Activated CD4-positive, alpha-beta memory T cell treated with anti-CD3 and anti-CD28 coated beads for 36 hours (primary cell): ENCODE measurements at regions of chr16 and their contacts with region 1.

Region 1: GRCh38 chr16:80540516-80541272 is at the start of gene DYNLRB2:
- DNase-seq: peak; percentile 96
- H3K4me3 Mint-ChIP-seq: peak within 1 kb of the TSS; percentile 95
- H3K27ac Mint-ChIP-seq: peak within 1 kb of the TSS; percentile 94
- H3K4me1 Mint-ChIP-seq: peaks cover 26% of the 10 kb centered on the region
- H3K27me3 Mint-ChIP-seq: no peaks in the 10 kb centered on the region
- total RNA-seq, gene DYNLRB2: not detected

Region 2: DNA sequence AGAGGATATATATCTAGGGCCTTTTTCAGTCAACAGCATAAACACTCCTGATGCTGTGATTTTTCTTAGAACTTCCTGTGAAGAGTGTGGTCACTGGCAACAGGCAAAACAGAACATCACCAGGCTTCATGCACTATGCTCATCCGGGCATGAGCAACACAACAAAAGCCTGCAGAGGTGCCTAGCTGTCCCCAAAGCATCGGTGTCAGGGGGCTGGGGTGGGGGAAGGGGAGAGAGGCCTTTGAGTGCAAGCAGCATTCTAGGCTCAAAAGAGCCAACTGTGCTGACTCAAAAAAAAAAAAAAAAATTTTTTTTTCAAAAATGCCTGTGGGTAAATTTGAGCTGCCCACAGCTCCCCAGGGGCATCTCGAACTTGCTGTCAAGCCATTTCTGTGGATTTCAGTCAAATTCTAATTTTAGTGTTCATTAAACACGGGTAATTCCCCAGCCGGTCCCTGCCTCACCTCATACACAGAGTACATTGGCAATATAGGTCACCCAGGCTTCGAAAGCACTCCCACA is 194.5 kb before region 1 on chr16:
- CTCF ChIA-PET with region 1: no interaction called
- POLR2A ChIA-PET with region 1: no interaction called
- intact Hi-C with region 1: no loop called
- DNase-seq: no peak
- H3K4me3 Mint-ChIP-seq: no peak overlapping the region
- H3K27ac Mint-ChIP-seq: no peak overlapping the region
- H3K4me1 Mint-ChIP-seq: no peaks in the 10 kb centered on the region
- H3K27me3 Mint-ChIP-seq: peaks cover 4% of the 10 kb centered on the region

Region 3: GRCh38 chr16:80569440-80570105 is 28.9 kb after region 1 on chr16:
- CTCF ChIA-PET with region 1: no interaction called
- POLR2A ChIA-PET with region 1: no interaction called
- intact Hi-C with region 1: loop called (anchors 1 kb)
- DNase-seq: peak; percentile 92
- H3K4me3 Mint-ChIP-seq: peak overlapping the region; percentile 22
- H3K27ac Mint-ChIP-seq: peak overlapping the region; percentile 85
- H3K4me1 Mint-ChIP-seq: peaks cover 36% of the 10 kb centered on the region
- H3K27me3 Mint-ChIP-seq: no peaks in the 10 kb centered on the region

Region 4: GRCh38 chr16:80585764-80586163 is 45.1 kb after region 1 on chr16:
- CTCF ChIA-PET with region 1: interaction called, 6 read pairs
- POLR2A ChIA-PET with region 1: no interaction called
- intact Hi-C with region 1: loop called (anchors 1 kb)
- DNase-seq: peak; percentile 43
- H3K4me3 Mint-ChIP-seq: no peak overlapping the region
- H3K27ac Mint-ChIP-seq: no peak overlapping the region
- H3K4me1 Mint-ChIP-seq: peaks cover 61% of the 10 kb centered on the region
- H3K27me3 Mint-ChIP-seq: peaks cover 16% of the 10 kb centered on the region

Region 5: GRCh38 chr16:80627108-80627507 is 86.4 kb after region 1 on chr16:
- CTCF ChIA-PET with region 1: no interaction called
- POLR2A ChIA-PET with region 1: no interaction called
- intact Hi-C with region 1: no loop called
- DNase-seq: no peak
- H3K4me3 Mint-ChIP-seq: no peak overlapping the region
- H3K27ac Mint-ChIP-seq: no peak overlapping the region
- H3K4me1 Mint-ChIP-seq: no peaks in the 10 kb centered on the region
- H3K27me3 Mint-ChIP-seq: no peaks in the 10 kb centered on the region

Region 6: GRCh38 chr16:80656711-80657150 is 116.0 kb after region 1 on chr16:
- CTCF ChIA-PET with region 1: no interaction called
- POLR2A ChIA-PET with region 1: no interaction called
- intact Hi-C with region 1: loop called (anchors 2 kb)
- DNase-seq: peak; percentile 62
- H3K4me3 Mint-ChIP-seq: peak overlapping the region; percentile 73
- H3K27ac Mint-ChIP-seq: peak overlapping the region; percentile 76
- H3K4me1 Mint-ChIP-seq: peaks cover 29% of the 10 kb centered on the region
- H3K27me3 Mint-ChIP-seq: no peaks in the 10 kb centered on the region

Region 7: GRCh38 chr16:80746231-80746630 is 205.5 kb after region 1 on chr16:
- CTCF ChIA-PET with region 1: no interaction called
- POLR2A ChIA-PET with region 1: no interaction called
- intact Hi-C with region 1: loop called (anchors 5 kb)
- DNase-seq: no peak
- H3K4me3 Mint-ChIP-seq: no peak overlapping the region
- H3K27ac Mint-ChIP-seq: no peak overlapping the region
- H3K4me1 Mint-ChIP-seq: peaks cover 35% of the 10 kb centered on the region
- H3K27me3 Mint-ChIP-seq: no peaks in the 10 kb centered on the region

Region 8: GRCh38 chr16:80759419-80760162 is 218.9 kb after region 1 on chr16:
- CTCF ChIA-PET with region 1: no interaction called
- POLR2A ChIA-PET with region 1: no interaction called
- intact Hi-C with region 1: loop called (anchors 1 kb)
- DNase-seq: no peak
- H3K4me3 Mint-ChIP-seq: peak overlapping the region; percentile 35
- H3K27ac Mint-ChIP-seq: peak overlapping the region; percentile 82
- H3K4me1 Mint-ChIP-seq: peaks cover 21% of the 10 kb centered on the region
- H3K27me3 Mint-ChIP-seq: no peaks in the 10 kb centered on the region